ENCODE measurements at regions of chr16 and their contacts with region 1.

Region 1: GRCh38 chr16:30813821-30814189 is 26.8 kb upstream of the ZNF629 start:
- DNase-seq: no peak
- ATAC-seq: no peak
- H3K4me3 ChIP-seq: peak overlapping the region; percentile 57 to 58
- H3K27ac ChIP-seq: peak overlapping the region; percentile 45
- H3K4me1 ChIP-seq: peaks cover 10 to 16% of the 10 kb centered on the region in 2 experiments
- H3K27me3 ChIP-seq: no peaks in the 10 kb centered on the region
- CTCF ChIP-seq: no peak
- POLR2A ChIP-seq: no peak
- RAD21 ChIP-seq: no peak

Region 2: DNA sequence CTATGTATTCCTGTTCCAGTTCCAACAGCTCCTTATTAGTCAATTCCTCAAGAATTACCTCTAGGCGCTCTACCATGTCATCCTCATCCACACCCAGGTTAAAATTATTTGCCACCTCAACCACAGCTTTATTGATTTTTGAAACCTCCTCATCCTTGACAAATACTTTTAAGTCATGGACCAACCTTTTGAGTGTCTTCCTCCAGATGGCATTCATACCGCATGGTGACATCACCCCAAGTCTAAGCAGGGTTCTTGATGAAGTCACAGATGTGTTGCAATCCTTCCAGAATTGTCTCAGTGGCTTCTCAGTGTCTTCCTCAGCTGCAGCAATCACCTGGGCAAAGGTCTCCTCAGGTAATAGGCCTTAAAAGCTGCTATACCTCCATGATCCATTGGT is 40.0 kb after region 1 on chr16:
- CTCF ChIA-PET with region 1: no interaction called
- POLR2A ChIA-PET with region 1: no interaction called
- RAD21 ChIA-PET with region 1: no interaction called
- intact Hi-C with region 1: loop called (anchors 5 kb)
- DNase-seq: no peak
- ATAC-seq: no peak
- H3K4me3 ChIP-seq: no peak overlapping the region
- H3K27ac ChIP-seq: no peak overlapping the region
- H3K4me1 ChIP-seq: no peaks in the 10 kb centered on the region; a peak in 1 of 4 replicates
- H3K27me3 ChIP-seq: no peaks in the 10 kb centered on the region
- CTCF ChIP-seq: no peak
- POLR2A ChIP-seq: no peak
- RAD21 ChIP-seq: no peak

Measured in HCT116 (cell line).